Esophagus squamous epithelium (tissue), 5 donors: ENCODE measurements at regions of chr6 and their contacts with region 1.

Region 1: GRCh38 chr6:53059648-53060589 is 5.3 kb upstream of the FBXO9 start:
- DNase-seq: no peak
- H3K4me3 ChIP-seq: peak overlapping the region; percentile 74 to 96 (median 82)
- H3K27ac ChIP-seq: peak overlapping the region in 3 of 4 donors; percentile 95 to 96 (median 96)
- H3K4me1 ChIP-seq: peaks cover 15 to 78% (median 30%) of the 10 kb centered on the region in 3 donors
- H3K27me3 ChIP-seq: no peaks in the 10 kb centered on the region
- CTCF ChIP-seq: no peak
- POLR2A ChIP-seq: no peak

Region 2: DNA sequence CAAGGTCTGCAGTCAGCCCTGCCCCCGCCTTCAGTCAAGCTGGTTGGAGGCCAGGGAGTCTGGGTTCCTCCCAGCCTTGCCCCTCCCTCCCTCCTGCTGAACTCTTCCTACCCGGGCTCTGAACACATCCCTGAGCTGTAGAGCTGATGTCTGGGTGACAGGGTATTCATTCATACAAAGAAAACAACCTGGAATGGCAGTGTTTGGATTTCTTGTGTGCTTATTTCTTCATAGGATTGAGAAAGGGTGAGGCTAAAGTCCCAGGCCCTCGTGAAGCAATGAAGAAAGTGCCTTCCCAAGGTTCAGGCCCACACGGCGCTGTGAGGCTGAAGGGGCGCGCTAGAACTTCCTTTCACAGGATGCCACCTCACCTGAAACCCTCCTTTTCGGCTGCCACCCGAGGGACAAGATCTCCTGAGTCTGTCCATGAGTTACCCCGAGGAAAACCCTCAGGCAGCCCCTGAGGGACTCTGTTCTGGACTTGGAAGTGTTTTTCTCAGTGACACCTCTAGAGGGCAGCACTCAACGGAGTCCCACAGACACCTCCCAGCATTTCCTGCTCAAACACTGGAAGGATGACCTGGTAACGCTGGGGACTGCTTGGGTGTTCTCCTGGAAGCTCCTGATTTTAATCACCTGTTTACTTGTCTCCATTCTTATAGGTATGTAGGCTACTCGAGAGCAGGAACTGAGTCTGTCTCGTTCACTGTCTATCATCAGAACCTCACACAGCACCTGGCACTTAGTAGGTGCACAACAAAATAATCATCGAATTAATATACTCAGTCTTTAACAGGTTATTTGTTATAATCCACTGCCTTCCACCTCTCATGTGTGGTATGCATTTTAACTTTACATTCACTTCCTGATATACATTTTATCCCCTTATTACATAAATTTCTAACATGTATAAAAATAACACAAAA is 244.5 kb before region 1 on chr6:
- intact Hi-C with region 1: loop called (anchors 10 kb)
- DNase-seq: no peak
- H3K4me3 ChIP-seq: no peak overlapping the region
- H3K27ac ChIP-seq: no peak overlapping the region
- H3K4me1 ChIP-seq: peaks cover 0 to 7% (median 0%) of the 10 kb centered on the region in 3 donors
- H3K27me3 ChIP-seq: no peaks in the 10 kb centered on the region
- CTCF ChIP-seq: peak in 5 of 6 experiments; percentile 56 to 69 (median 60)
- POLR2A ChIP-seq: no peak

Region 3: DNA sequence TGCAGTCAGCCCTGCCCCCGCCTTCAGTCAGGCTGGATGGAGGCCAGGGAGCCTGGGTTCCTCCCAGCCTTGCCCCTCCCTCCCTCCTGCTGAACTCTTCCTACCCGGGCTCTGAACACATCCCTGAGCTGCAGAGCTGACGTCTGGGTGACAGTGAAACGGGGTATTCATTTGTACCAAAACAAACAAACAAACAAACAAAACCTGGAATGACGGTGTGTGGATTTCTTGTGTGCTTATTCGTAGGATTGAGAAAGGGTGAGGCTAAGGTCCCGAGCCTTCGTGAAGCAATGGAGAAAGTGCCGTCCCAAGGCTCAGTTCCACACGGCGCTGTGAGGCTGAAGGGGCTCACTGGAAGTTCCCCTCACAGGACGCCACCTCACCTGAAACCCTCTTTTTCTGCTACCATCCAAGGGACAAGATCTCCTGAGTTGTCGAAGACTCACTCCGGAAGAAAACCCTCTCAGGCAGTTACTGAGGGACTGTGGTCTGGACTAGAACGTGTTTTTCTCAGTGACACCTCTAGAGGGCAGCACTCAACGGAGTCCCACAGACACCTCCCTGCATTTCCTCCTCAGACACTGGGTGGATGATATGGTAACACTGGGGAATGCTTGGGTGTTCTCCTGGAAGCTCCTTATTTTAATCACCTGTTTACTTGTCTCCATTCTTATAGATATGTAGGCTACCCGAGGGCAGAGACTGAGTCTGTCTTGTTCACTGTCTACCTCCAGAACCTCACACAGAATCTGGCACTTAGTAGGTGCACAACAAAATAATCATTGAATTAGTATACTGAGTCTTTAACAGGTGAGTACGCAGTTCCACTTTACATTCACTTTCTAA is 177.7 kb before region 1 on chr6:
- intact Hi-C with region 1: loop called (anchors 10 kb)
- DNase-seq: peak; percentile 3
- H3K4me3 ChIP-seq: peak overlapping the region; percentile 30 to 76 (median 54)
- H3K27ac ChIP-seq: peak overlapping the region; percentile 80 to 88 (median 83)
- H3K4me1 ChIP-seq: peaks cover 0 to 8% (median 3%) of the 10 kb centered on the region in 3 donors
- H3K27me3 ChIP-seq: no peaks in the 10 kb centered on the region
- CTCF ChIP-seq: peak; percentile 63 to 84 (median 75)
- POLR2A ChIP-seq: no peak